ENCODE measurements at regions of chr15 and their contacts with region 1.

Region 1: GRCh38 chr15:78241007-78241406 is 6.6 kb upstream of the ACSBG1 start:
- DNase-seq: peak; percentile 92
- H3K4me3 ChIP-seq: no peak overlapping the region
- H3K27ac ChIP-seq: no peak overlapping the region
- H3K4me1 ChIP-seq: no peaks in the 10 kb centered on the region
- H3K27me3 ChIP-seq: no peaks in the 10 kb centered on the region
- CTCF ChIP-seq: peak; percentile 72 to 86 (median 85)
- POLR2A ChIP-seq: no peak

Region 2: DNA sequence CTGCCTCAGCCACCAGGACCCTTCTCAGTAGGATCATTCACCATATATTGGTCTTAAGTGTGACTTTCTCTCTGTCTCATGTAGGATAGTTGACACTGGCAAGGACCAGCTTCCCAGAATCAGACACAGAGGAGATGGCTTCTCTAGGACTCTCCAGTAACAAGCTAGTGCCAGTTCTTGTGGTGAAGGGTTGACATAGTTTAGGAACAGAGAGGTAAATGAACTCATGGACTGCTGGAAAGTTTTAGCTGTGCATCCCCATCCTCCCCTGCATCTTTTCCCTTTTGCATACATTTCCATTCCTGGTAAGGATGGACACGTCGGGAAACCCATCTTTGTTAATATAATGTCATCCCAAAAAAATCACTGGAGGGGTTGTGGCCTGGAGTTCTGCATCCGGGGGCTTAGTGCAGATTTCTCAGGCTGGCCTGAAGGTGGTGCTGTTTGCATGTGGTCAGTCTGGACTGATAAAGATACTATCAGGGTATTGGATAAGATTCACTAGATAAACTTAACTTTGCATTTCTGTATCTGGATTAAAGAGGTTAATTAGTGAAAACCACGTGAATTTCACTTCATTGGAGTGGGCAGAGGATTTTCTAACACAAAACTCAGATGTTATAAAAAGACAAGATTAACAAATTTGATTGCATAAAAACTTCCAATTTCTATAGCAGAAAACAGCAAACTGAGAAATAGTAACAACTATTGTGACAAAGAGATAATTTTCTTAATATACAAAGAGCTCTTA is 274.3 kb before region 1 on chr15:
- intact Hi-C with region 1: loop called (anchors 10 kb)
- DNase-seq: no peak
- H3K4me3 ChIP-seq: no peak overlapping the region
- H3K27ac ChIP-seq: no peak overlapping the region
- H3K4me1 ChIP-seq: peaks cover 6% of the 10 kb centered on the region
- H3K27me3 ChIP-seq: no peaks in the 10 kb centered on the region
- CTCF ChIP-seq: peak; percentile 51 to 74 (median 71)
- POLR2A ChIP-seq: no peak

Region 3: DNA sequence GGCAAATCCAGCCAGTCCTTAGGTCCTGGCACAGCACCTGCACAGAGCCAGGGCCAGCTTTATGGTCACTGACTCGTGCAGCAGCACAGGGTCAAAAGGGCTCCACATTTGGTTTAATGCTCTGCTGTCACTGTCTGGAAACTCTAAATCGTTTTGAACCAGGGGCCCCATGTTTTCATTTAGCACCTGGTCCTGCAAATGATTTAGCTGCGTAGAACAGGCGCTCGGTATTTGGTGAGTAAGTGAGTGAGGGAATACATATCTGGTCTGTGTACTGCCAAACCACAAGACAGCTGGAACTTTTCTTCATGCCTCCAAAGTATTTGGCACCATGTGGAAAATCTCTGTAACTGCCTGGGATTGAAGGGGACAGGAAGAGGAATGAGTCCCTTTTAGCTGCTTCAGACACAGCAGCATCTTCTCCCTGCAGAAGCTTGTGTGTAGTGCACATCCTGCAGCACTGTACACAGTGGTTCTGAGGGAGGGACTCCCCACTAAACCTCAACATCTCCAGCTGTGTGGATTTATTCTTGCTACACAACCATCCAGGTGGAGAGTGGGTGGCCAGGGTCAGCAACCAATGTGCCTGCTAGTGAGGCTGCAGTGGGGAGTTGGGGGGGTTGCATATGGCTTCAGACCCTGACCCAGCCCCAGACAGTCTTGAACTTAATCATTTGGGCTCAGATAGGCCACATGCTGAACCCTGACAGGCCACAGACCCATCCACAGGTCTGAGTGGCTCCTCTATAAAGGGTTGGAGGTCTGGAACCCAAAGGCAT is 147.6 kb before region 1 on chr15:
- intact Hi-C with region 1: no loop called
- DNase-seq: no peak
- H3K4me3 ChIP-seq: no peak overlapping the region
- H3K27ac ChIP-seq: no peak overlapping the region
- H3K4me1 ChIP-seq: no peaks in the 10 kb centered on the region
- H3K27me3 ChIP-seq: no peaks in the 10 kb centered on the region
- CTCF ChIP-seq: no peak
- POLR2A ChIP-seq: no peak